ENCODE measurements at regions of chr11 and their contacts with region 1.

Region 1: DNA sequence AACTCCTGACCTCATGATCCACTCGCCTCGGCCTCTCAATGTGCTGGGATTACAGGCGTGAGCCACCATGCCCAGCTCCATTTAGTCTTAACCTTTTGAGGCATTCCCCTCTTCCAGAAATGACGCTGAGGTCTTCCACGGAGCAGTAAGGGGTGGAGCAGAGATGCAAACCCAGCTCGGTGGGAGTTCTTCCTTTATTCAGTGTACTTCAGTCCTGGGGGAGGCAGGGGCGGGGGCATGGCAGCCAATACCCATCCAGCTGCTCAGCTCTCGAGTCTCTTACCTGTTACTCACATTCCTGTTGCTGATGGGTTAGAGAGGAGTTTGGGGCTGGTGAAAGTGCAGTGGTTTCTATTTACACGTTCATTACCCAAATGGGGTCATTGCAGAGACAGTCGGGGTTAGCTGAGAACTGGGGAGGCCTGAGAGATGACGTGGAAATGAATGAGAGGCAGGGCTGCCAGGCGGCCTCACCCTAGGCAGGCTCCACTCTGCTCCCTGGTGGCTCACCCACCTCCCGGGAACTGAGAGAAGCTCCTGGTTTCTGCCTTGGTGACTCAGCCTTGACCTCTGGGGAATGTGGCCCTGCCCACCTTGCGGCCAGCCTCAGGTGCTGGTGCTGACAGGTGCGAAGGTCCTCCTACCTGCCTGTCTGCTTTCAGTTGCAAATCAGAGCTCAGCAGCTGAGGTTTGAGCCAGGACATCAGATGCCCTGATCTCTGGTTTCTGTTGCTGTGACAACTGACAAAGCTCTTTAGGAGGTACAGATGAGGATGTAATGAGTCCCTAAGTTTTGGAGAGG is 13.4 kb upstream of the ST14 start:
- DNase-seq: peak; percentile 97 to 100
- H3K4me3 ChIP-seq: peak overlapping the region; percentile 10; the same call in 1 of the 2 replicates
- H3K27ac ChIP-seq: peak overlapping the region; percentile 98
- H3K4me1 ChIP-seq: peaks cover 37% of the 10 kb centered on the region
- H3K27me3 ChIP-seq: no peaks in the 10 kb centered on the region
- CTCF ChIP-seq: peak; percentile 38

Region 2: DNA sequence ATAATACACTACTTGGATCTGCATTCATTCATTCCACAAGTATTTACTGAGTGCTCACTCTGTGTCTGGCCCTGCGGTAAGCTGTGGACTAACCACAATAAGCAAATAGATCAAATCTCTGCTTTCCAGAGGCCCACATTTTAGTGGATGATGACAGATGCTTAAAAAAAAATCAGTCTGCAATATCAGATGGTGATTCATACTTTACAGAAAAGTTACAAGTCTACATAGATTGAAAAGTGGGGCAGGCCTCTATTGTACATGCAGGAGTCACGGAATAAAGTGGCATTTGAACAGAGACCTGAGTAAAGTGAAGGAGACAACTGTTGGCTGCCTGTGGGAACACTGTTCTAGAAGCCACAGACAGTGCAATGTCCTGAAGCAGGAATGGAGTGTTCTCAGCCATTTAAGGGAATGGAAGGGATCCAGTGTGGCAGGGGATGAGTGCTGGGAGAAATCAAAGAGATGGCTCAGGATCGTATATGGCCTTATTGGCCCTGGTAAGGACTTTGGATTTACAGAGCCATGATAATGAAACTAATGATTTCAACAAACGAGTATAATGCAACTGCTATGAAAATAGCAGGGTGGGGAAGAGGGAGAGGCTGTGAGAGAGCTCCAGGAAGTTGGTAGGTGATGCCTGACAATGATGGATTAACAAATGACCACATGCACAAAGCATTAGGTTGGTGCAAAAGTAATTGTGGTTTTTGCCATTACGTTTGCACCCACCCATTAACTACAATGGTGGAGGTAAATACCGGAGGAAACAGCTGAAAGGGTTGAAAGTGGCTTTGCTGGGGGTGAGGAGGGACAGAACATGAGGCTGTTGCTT is 299.5 kb before region 1 on chr11:
- CTCF ChIA-PET with region 1: no interaction called
- POLR2A ChIA-PET with region 1: interaction called, 6 read pairs
- intact Hi-C with region 1: loop called (anchors 2 kb)
- DNase-seq: peak; percentile 68 to 99
- H3K4me3 ChIP-seq: peak overlapping the region; percentile 47
- H3K27ac ChIP-seq: peak overlapping the region; percentile 99
- H3K4me1 ChIP-seq: peaks cover 46% of the 10 kb centered on the region
- H3K27me3 ChIP-seq: no peaks in the 10 kb centered on the region
- CTCF ChIP-seq: no peak

Region 3: DNA sequence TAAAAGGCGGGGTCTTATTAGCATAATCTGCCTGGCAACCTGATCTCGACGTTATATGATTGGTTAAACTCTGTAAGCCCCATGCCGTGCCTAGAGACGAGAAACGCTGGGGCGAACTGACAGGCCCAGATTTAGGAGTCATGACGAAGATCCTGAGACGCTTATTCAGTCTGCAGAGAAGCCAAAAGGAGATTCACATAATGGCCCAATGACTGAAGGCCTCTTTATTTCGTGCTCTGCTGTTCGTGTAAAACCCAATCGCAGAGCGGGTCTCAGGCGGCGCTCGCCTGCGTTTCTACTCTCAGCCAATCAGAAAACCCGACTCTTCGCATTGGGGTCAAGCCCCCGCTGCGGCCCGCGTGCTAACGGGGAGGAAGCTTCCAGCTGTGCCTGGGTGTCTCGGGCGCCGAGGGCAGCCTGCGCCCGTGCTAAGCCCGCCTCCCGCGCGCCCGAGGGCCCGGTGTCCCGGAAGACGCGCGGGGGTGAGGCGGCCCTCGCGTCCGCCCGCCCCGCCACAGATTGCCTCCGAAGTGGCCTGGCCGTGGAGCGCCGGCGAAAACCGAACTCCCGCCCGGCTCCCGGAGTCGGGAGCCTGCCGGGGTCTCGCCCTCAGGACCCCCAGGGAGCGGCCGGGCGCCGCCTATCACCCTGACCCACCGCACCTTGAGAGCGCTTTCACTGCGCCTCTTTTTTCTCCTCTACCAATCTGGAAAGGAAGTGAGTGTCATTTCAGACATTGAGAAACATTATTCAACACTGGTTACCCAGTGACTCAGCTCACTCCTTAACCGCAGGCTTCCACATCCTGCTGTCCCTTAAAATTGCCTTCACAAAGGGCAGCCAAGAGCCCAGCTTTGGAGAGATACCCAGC is 143.1 kb before region 1 on chr11:
- CTCF ChIA-PET with region 1: interaction called, 5 read pairs
- POLR2A ChIA-PET with region 1: interaction called, 4 read pairs
- intact Hi-C with region 1: loop called (anchors 1 kb)
- DNase-seq: peak; percentile 89 to 97
- H3K4me3 ChIP-seq: peak overlapping the region; percentile 75
- H3K27ac ChIP-seq: peak overlapping the region; percentile 99
- H3K4me1 ChIP-seq: peaks cover 30% of the 10 kb centered on the region
- H3K27me3 ChIP-seq: no peaks in the 10 kb centered on the region
- CTCF ChIP-seq: no peak

Region 4: DNA sequence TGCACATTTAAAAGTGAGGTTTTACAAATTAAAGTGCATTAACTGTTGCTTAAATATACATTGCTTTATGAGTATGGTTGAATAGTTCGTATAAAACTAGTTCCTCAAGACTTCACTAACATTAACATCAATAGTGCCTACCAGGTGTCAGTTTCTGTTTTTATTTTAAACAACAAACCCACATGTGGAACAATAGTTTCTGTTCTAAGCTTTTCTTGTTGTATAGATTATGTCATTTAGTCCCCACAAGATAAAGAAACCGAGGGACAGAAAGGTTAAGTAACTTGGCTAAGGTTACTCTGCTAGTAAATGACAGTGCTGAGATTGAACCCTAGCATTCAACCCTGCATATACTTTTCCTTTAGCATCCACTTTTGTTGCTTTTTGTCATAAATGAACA is 28.0 kb before region 1 on chr11:
- CTCF ChIA-PET with region 1: no interaction called
- POLR2A ChIA-PET with region 1: no interaction called
- intact Hi-C with region 1: no loop called
- DNase-seq: no peak
- H3K4me3 ChIP-seq: no peak overlapping the region
- H3K27ac ChIP-seq: no peak overlapping the region
- H3K4me1 ChIP-seq: peaks cover 40% of the 10 kb centered on the region
- H3K27me3 ChIP-seq: no peaks in the 10 kb centered on the region
- CTCF ChIP-seq: no peak

Region 5: GRCh38 chr11:130159657-130160497 is 13.7 kb after region 1 on chr11 and contains the start of gene ST14:
- CTCF ChIA-PET with region 1: interaction called, 6 read pairs
- POLR2A ChIA-PET with region 1: interaction called, 15 read pairs
- intact Hi-C with region 1: no loop called
- DNase-seq: peak; percentile 63 to 76
- H3K4me3 ChIP-seq: peak within 1 kb of the TSS; percentile 100
- H3K27ac ChIP-seq: peak within 1 kb of the TSS; percentile 75
- H3K4me1 ChIP-seq: peaks cover 58% of the 10 kb centered on the region
- H3K27me3 ChIP-seq: no peaks in the 10 kb centered on the region
- CTCF ChIP-seq: no peak
- total RNA-seq, gene ST14: 139 and 141 TPM in 2 replicates

Region 6: GRCh38 chr11:130178441-130179339 is 32.5 kb after region 1 on chr11:
- CTCF ChIA-PET with region 1: interaction called, 7 read pairs
- POLR2A ChIA-PET with region 1: no interaction called
- intact Hi-C with region 1: loop called (anchors 2 kb)
- DNase-seq: peak in 1 of 2 experiments; percentile 58
- H3K4me3 ChIP-seq: no peak overlapping the region
- H3K27ac ChIP-seq: no peak overlapping the region
- H3K4me1 ChIP-seq: peaks cover 46% of the 10 kb centered on the region
- H3K27me3 ChIP-seq: no peaks in the 10 kb centered on the region
- CTCF ChIP-seq: no peak

Measured in PC-9 (cell line).